HCT116 (cell line): ENCODE measurements at regions of chr18 and their contacts with region 1.

Region 1: DNA sequence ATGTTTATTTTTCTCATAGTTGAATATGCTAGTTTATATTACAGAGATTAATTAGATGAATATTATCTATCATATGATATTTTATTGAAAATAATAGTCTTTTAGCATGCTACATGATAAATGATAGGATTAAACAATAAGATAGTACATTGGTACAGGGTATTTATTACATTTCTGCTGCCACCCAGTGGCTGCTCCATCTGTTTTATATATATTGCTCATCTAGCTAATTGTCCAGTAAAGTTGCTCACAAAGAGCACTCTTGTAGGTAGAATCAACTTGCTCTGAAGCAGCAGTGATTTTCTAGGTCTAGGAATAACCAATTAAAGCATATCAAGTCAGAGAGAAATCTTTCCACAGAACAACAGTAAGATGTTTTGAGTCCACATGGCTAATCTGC is 183.3 kb downstream of the ASXL3 start:
- DNase-seq: no peak
- ATAC-seq: no peak
- H3K4me3 ChIP-seq: no peak overlapping the region
- H3K27ac ChIP-seq: no peak overlapping the region
- H3K4me1 ChIP-seq: no peaks in the 10 kb centered on the region
- H3K27me3 ChIP-seq: no peaks in the 10 kb centered on the region
- CTCF ChIP-seq: no peak
- POLR2A ChIP-seq: no peak
- RAD21 ChIP-seq: no peak

Region 2: DNA sequence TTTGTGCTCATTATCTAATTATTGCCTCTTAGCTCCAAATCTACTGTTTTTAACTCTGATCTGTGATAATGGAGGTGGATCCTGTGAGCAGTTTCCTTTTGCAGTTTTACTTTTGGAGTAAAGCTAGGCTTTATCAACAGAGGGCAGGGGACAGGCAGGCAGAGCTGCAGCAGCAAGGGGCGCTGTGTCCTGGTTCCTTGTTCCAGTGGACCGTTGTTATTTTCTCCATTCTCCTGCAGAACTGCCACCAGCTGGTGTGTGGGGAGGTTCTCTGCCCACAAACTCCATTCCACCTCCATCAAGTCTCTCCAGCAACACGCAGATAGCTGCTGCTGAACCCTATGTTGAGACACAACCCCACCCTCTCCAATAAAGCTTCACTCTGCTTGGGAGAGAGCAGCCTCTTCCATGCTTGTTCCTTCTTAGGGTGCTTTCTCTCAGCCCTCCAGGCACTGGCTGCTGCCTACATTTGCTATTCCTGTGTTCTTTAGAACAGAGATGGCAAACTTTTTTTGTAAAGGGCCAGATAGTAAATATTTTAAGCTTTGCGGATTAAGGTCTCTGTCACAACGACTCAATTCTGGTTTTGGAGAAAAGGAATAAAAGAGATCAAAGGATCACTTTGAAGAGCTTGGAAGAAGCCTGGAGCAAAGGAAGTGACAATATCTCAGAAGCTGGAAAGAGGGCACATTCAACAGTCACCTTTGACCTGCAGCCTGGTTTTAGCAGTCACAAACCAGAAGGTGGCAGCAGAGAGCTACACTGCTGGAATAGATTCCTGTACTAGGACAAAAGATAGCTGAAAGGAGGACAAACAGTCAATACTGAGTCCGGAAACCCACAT is 529.7 kb before region 1 on chr18:
- CTCF ChIA-PET with region 1: interaction called, 8 read pairs
- POLR2A ChIA-PET with region 1: no interaction called
- RAD21 ChIA-PET with region 1: no interaction called
- intact Hi-C with region 1: loop called (anchors 10 kb)
- DNase-seq: peak; percentile 19
- ATAC-seq: peak; percentile 66; the same call in 1 of the 2 replicates
- H3K4me3 ChIP-seq: no peak overlapping the region
- H3K27ac ChIP-seq: no peak overlapping the region
- H3K4me1 ChIP-seq: no peaks in the 10 kb centered on the region
- H3K27me3 ChIP-seq: no peaks in the 10 kb centered on the region
- CTCF ChIP-seq: peak; percentile 26 to 79 (median 79); a peak in 5 of 6 replicates
- POLR2A ChIP-seq: no peak
- RAD21 ChIP-seq: peak; percentile 48